ENCODE measurements at regions of chr6 and their contacts with region 1.

Region 1: GRCh38 chr6:157764178-157765033 is 58.6 kb upstream of the SNX9 start:
- DNase-seq: peak; percentile 98
- H3K4me3 Mint-ChIP-seq: peak overlapping the region; percentile 53
- H3K27ac Mint-ChIP-seq: peak overlapping the region; percentile 92
- H3K4me1 Mint-ChIP-seq: peaks cover 58% of the 10 kb centered on the region
- H3K27me3 Mint-ChIP-seq: no peaks in the 10 kb centered on the region
- CTCF ChIP-seq: no peak

Region 2: DNA sequence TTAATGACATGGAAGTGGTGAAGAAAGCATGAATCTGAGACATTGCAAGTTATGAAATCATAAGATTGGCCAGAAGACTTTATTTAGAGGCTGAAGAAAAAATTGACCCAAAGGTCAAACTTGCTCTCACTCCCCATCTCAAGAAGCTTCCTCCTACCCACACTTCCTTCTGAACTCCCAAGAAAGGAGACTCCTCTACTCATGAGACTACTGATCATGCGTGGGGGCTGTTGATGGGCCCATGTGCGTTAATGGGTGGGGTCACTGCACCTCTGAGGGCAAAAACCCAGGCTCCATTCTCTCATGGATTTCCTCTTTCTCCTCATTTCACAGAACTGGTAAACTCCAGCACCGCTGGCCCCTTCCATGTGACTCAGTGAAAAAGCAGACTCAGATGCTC is 1457.9 kb before region 1 on chr6:
- CTCF ChIA-PET with region 1: no interaction called
- POLR2A ChIA-PET with region 1: no interaction called
- intact Hi-C with region 1: no loop called
- DNase-seq: no peak
- H3K4me3 Mint-ChIP-seq: no peak overlapping the region
- H3K27ac Mint-ChIP-seq: peak overlapping the region; percentile 1
- H3K4me1 Mint-ChIP-seq: peaks cover 11% of the 10 kb centered on the region
- H3K27me3 Mint-ChIP-seq: no peaks in the 10 kb centered on the region
- CTCF ChIP-seq: no peak

Region 3: DNA sequence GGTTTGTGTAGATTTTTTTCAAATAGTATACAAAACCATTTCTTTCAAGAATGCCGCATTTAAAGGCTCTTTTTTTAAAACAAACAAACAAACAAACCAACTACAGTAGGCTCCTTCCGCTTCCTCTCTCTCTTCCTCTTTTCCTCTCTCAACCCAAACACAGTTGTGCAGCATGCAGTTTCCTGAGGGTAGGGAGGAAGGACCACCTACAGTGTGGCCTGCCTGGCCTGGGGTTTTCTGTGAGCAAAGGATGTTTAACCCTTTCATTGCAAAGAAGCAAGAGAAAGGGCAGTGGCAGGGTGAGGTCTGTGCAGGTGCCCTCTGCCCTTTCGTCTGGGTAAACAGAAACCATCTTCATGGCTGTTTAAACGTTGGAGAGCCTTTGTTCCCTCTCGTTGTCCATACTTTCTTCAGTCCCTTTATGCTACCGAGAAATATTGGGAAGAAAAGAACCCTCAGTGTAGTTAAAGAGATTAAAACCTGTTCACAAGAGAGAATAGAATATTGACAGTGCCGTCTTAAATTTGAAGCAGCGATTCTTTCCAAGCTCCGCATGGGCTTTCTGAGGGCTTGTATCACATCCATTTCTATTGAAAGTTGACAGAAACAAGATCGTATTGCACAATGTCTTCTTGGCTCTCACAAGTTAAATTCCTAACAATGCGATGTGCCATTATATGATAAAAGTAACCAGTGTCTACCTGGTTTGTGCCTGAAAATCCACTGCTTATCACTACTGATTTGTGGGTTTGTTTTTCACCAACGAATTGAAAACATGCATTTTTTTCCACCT is 156.9 kb before region 1 on chr6:
- CTCF ChIA-PET with region 1: no interaction called
- POLR2A ChIA-PET with region 1: no interaction called
- intact Hi-C with region 1: no loop called
- DNase-seq: no peak
- H3K4me3 Mint-ChIP-seq: no peak overlapping the region
- H3K27ac Mint-ChIP-seq: no peak overlapping the region
- H3K4me1 Mint-ChIP-seq: peaks cover 7% of the 10 kb centered on the region
- H3K27me3 Mint-ChIP-seq: no peaks in the 10 kb centered on the region
- CTCF ChIP-seq: no peak

Region 4: DNA sequence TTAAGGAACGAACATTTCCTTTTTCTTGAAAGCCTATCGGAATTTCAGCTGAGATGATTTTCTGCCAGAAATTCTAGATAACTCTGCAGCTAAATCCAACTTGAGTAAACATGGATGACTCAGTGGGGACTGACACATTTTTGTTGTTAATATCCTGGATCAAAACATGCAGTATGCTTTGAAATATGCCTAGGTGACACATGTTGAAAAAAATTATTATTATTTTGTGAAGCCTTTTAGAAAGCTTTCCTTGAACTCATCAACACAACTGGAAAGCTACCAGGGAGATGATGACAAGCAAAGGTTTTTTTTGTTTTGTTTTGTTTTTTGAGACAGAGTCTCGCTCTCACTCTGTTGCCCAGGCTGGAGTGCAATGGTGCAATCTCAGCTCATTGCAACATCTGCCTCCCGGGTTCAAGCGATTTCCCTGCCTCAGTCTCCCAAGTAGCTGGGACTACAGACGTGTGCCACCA is 81.4 kb before region 1 on chr6:
- CTCF ChIA-PET with region 1: no interaction called
- POLR2A ChIA-PET with region 1: interaction called, 11 read pairs
- intact Hi-C with region 1: no loop called
- DNase-seq: peak; percentile 64
- H3K4me3 Mint-ChIP-seq: no peak overlapping the region
- H3K27ac Mint-ChIP-seq: peak overlapping the region; percentile 58
- H3K4me1 Mint-ChIP-seq: no peaks in the 10 kb centered on the region
- H3K27me3 Mint-ChIP-seq: no peaks in the 10 kb centered on the region
- CTCF ChIP-seq: no peak

Region 5: DNA sequence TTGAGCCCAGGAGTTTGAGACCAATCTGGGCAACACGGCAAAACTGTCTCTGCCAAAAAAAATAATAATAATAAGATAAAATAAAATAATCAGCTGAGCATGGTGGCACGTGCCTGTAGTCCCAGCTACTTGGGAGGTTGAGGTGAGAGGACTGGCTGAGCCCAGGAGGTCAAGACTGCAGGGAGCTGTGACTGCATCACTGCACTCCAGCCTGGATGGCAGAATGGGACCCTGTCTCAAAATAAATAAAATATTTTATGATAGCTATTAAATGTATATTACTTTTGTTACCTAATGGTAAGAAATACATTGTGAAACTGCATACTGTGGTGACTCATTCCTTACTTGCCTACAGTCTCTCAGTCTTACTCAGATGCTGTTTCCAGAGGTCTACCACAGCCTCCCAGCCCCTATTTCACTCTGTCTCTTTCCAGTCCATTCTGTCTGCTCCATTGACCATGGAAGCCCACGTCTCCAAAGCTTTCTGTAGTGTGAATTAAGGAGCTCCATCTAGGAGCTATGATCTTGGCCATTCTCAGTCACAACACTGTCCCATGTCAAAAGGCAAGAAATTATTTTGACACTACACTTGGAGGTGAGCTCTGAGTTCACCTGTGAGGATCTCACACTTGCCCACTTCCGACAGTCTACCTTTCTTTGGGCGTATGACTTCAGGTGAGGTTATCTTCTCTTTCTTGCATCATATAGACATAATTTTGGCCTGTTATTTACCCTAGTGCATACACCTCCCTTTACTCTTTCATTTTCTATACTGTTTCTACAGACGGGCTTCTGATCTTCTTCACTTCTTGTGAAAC is 36.2 kb after region 1 on chr6:
- CTCF ChIA-PET with region 1: interaction called, 3 read pairs
- POLR2A ChIA-PET with region 1: interaction called, 11 read pairs
- intact Hi-C with region 1: no loop called
- DNase-seq: peak; percentile 65
- H3K4me3 Mint-ChIP-seq: no peak overlapping the region
- H3K27ac Mint-ChIP-seq: no peak overlapping the region
- H3K4me1 Mint-ChIP-seq: peaks cover 8% of the 10 kb centered on the region
- H3K27me3 Mint-ChIP-seq: no peaks in the 10 kb centered on the region
- CTCF ChIP-seq: no peak

Region 6: GRCh38 chr6:157830354-157831017 is 66.1 kb after region 1 on chr6:
- CTCF ChIA-PET with region 1: interaction called, 5 read pairs
- POLR2A ChIA-PET with region 1: interaction called, 79 read pairs
- intact Hi-C with region 1: loop called (anchors 2 kb)
- DNase-seq: no peak
- H3K4me3 Mint-ChIP-seq: no peak overlapping the region
- H3K27ac Mint-ChIP-seq: no peak overlapping the region
- H3K4me1 Mint-ChIP-seq: peaks cover 41% of the 10 kb centered on the region
- H3K27me3 Mint-ChIP-seq: no peaks in the 10 kb centered on the region
- CTCF ChIP-seq: no peak